B cell (primary cell): ENCODE measurements at regions of chr20 and their contacts with region 1.

Region 1: DNA sequence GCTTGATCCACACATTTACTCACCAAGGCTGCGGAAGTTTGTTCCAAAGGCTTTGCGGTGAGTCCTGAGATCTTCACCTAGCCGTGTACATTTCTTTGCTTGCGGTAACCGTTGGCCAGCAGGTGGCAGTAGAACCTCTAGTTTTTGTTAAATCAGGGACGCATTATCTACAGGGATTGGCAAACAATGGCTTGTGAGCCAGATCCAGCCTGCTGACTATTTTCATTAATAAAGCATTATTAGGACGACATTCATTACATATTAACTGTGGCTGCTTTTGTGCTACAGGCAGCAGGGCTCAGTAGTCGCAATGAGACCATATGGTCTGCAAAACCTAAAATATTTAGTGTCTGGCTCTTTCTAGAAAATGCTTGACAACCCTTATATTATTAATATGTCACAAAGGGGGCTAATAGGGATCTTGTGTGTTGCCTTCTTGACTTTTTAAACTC is 174.1 kb downstream of the DOK5 start:
- DNase-seq: peak; percentile 61
- ATAC-seq: no peak
- H3K4me3 ChIP-seq: no peak overlapping the region
- H3K4me3 Mint-ChIP-seq: no peak overlapping the region
- H3K27ac ChIP-seq: no peak overlapping the region
- H3K27ac Mint-ChIP-seq: no peak overlapping the region
- H3K4me1 ChIP-seq: no peaks in the 10 kb centered on the region
- H3K4me1 Mint-ChIP-seq: no peaks in the 10 kb centered on the region
- H3K27me3 ChIP-seq: no peaks in the 10 kb centered on the region
- H3K27me3 Mint-ChIP-seq: peaks cover 12% of the 10 kb centered on the region
- CTCF ChIP-seq: peak; percentile 89

Region 2: DNA sequence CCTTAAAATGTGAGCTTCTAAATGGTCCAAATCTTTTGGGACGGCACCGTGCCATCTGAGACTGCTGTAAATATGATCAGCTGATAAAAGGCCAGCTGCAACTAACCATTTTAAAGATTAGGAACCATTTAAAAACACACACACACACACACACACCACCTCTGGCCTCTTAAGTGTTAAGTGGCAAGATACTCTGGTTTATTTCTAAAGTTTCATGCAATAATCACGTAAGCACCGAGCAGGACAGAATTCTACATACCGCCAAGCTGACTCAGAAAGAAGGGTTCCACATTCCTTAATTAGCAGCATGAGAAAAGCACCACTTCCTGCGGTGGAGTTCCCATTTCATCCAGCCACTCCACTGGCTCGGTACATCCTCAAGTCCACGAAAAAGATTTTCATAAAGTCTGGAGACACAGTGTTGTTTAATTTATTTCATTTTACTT is 1038.1 kb before region 1 on chr20:
- CTCF ChIA-PET with region 1: no interaction called
- POLR2A ChIA-PET with region 1: interaction called, 11 read pairs
- intact Hi-C with region 1: no loop called
- DNase-seq: no peak
- ATAC-seq: no peak
- H3K4me3 ChIP-seq: no peak overlapping the region
- H3K4me3 Mint-ChIP-seq: peak overlapping the region; percentile 27
- H3K27ac ChIP-seq: no peak overlapping the region
- H3K27ac Mint-ChIP-seq: peak overlapping the region; percentile 62
- H3K4me1 ChIP-seq: peaks cover 28% of the 10 kb centered on the region in 2 donors
- H3K4me1 Mint-ChIP-seq: peaks cover 34% of the 10 kb centered on the region
- H3K27me3 ChIP-seq: no peaks in the 10 kb centered on the region
- H3K27me3 Mint-ChIP-seq: no peaks in the 10 kb centered on the region
- CTCF ChIP-seq: no peak

Region 3: GRCh38 chr20:54093423-54094267 is 555.9 kb before region 1 on chr20:
- CTCF ChIA-PET with region 1: interaction called, 5 read pairs
- POLR2A ChIA-PET with region 1: no interaction called
- intact Hi-C with region 1: loop called (anchors 2 kb)
- DNase-seq: no peak
- ATAC-seq: no peak
- H3K4me3 ChIP-seq: no peak overlapping the region
- H3K4me3 Mint-ChIP-seq: no peak overlapping the region
- H3K27ac ChIP-seq: no peak overlapping the region
- H3K27ac Mint-ChIP-seq: no peak overlapping the region
- H3K4me1 ChIP-seq: peaks cover 5 to 7% of the 10 kb centered on the region in 2 donors
- H3K4me1 Mint-ChIP-seq: peaks cover 13% of the 10 kb centered on the region
- H3K27me3 ChIP-seq: peaks cover 0 to 3% (median 0%) of the 10 kb centered on the region in 4 experiments
- H3K27me3 Mint-ChIP-seq: peaks cover 11% of the 10 kb centered on the region
- CTCF ChIP-seq: no peak

Region 4: GRCh38 chr20:54219751-54220426 is 429.6 kb before region 1 on chr20:
- CTCF ChIA-PET with region 1: interaction called, 9 read pairs
- POLR2A ChIA-PET with region 1: no interaction called
- intact Hi-C with region 1: loop called (anchors 2 kb)
- DNase-seq: no peak
- ATAC-seq: no peak
- H3K4me3 ChIP-seq: no peak overlapping the region
- H3K4me3 Mint-ChIP-seq: no peak overlapping the region
- H3K27ac ChIP-seq: no peak overlapping the region
- H3K27ac Mint-ChIP-seq: no peak overlapping the region
- H3K4me1 ChIP-seq: no peaks in the 10 kb centered on the region
- H3K4me1 Mint-ChIP-seq: no peaks in the 10 kb centered on the region
- H3K27me3 ChIP-seq: no peaks in the 10 kb centered on the region
- H3K27me3 Mint-ChIP-seq: no peaks in the 10 kb centered on the region
- CTCF ChIP-seq: no peak